ENCODE measurements at regions of chr5 and their contacts with region 1.

Region 1: DNA sequence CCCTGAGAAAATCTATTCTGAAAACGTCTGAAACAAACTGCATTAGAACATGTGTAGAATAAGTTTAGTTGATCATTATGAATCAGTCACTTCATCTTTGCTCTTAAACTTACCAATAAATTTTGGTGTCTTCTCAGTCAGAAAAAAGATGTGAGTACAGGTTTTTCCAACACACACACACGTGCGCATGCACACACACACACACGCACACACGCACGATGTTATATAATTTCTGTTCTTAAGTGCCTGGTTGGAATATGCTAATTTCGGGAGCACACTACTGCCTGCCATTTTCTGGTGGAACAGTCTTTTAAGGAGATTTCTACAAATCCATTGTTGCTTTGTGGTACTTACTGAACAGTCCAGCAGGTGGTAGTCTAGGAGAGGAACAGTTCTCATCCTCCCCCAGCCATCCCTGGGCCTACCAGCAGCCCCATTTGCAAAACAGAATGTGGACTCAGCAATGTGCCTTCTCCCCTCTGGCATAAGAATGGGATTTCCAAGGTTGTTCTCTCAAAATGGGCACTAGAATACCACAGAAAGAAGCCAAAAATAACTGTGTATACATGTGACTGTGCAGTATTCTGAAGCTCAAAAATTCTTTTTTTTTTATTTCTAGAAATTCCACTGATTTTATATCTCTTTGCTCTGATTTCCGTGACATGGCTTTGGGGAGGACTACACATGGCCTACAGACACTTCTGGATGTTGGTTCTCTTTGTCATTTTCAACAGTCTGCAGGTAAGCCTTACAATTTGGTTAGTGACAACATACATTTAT is 281.3 kb downstream of the ARRDC3 start:
- DNase-seq: peak; percentile 75
- H3K4me3 ChIP-seq: no peak overlapping the region
- H3K27ac ChIP-seq: peak overlapping the region in 1 of 4 donors; percentile 20
- H3K4me1 ChIP-seq: peaks cover 0 to 28% (median 7%) of the 10 kb centered on the region in 4 donors
- H3K27me3 ChIP-seq: no peaks in the 10 kb centered on the region
- CTCF ChIP-seq: peak; percentile 73 to 92 (median 77)
- EP300 ChIP-seq: no peak
- POLR2A ChIP-seq: no peak

Region 2: DNA sequence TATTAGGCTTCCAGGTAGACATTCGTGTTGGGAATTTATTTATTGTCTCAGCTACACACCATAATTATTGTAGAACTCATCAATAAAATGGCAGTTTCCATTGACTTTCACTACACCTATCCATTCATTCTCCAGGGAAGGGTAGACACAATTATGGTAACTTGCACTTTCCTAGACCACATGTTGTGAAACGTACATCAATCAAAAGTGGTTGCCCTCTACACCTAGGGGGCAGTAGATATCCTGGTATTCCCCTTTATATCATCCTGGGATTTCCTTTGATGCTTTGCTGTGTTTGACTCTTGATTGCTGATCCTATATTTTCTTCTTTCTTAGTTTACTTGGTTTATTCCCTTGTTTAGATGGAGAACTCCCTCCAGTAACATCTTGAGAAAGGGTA is 495.3 kb before region 1 on chr5:
- in situ Hi-C with region 1: no loop called
- intact Hi-C with region 1: no loop called
- DNase-seq: no peak
- H3K4me3 ChIP-seq: no peak overlapping the region
- H3K27ac ChIP-seq: no peak overlapping the region
- H3K4me1 ChIP-seq: peaks cover 0 to 4% (median 1%) of the 10 kb centered on the region in 4 donors
- H3K27me3 ChIP-seq: no peaks in the 10 kb centered on the region
- CTCF ChIP-seq: peak in 1 of 5 experiments; percentile 26
- EP300 ChIP-seq: no peak
- POLR2A ChIP-seq: no peak

Region 3: DNA sequence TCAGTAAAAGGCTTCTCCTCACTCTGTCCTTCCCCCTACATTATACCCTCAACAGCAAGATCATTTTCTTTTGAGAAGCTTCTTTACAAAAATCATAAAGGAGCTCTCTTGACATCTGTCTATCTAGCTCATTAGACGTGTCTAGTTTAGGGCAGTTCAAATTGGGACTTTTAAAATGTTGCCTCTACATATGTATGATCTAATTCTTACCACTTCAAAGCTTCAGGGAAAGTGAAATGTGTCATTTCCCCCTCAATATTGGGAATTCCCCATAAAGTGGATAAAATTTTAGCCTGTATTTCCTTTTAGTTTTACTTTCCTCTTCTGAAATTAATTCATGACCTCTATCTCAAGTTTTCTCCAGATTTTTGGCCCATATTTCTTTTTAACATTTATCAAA is 42.4 kb before region 1 on chr5:
- in situ Hi-C with region 1: no loop called
- intact Hi-C with region 1: no loop called
- DNase-seq: no peak
- H3K4me3 ChIP-seq: no peak overlapping the region
- H3K27ac ChIP-seq: peak overlapping the region in 2 of 4 donors; percentile 55 to 71
- H3K4me1 ChIP-seq: peaks cover 0 to 27% (median 11%) of the 10 kb centered on the region in 4 donors
- H3K27me3 ChIP-seq: no peaks in the 10 kb centered on the region
- CTCF ChIP-seq: no peak
- EP300 ChIP-seq: no peak
- POLR2A ChIP-seq: no peak

Region 4: GRCh38 chr5:91219803-91220371 is 118.1 kb after region 1 on chr5:
- in situ Hi-C with region 1: loop called in 1 of 4 experiments (anchors 10 kb)
- intact Hi-C with region 1: no loop called
- DNase-seq: no peak
- H3K4me3 ChIP-seq: no peak overlapping the region
- H3K27ac ChIP-seq: peak overlapping the region in 1 of 4 donors; percentile 44
- H3K4me1 ChIP-seq: peaks cover 0 to 14% (median 4%) of the 10 kb centered on the region in 4 donors
- H3K27me3 ChIP-seq: no peaks in the 10 kb centered on the region
- CTCF ChIP-seq: peak in 1 of 5 experiments; percentile 17
- EP300 ChIP-seq: no peak
- POLR2A ChIP-seq: no peak

Region 5: DNA sequence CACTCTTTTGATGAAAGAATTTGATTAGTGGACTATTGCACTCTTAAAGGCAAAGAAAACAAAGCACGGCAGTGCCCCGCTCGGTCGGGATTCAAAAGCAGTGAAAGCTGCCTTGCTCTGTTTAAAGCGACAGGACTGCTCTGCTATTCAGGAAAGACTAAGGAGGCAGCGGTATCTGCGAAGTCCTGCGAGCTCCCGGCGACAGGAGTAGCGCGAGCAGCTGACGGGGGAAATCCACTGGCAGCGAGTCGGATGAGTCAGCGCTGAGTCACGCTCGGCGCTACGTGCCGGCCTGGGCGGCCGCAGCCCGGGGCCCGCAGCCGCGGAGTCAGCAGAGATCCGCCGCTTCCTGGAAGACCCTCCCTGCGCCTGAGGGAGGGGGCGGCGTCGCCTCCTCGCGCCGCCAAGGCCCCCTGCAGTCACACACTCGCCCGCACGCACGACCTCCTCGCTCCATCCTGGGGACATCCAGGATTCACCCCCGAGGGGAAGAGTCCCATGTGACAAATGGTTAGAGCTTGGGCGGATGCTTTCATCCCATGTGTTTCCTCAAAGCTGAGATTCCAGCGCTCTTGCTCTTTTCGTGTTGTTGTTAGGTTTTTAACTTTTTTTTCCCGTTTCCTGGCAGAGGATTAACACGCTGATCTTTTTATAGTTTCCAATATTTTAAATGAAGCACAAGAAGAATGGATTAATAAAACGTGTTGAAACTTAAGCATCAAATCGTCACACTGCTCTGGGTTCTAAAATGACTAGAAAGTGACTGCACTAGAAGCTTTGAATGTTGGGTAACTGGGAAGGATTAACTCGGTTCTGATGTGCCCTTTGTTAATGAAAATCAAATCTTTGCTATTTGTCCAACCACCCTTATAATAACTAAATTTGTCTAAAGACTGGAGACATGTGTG is 178.8 kb after region 1 on chr5:
- in situ Hi-C with region 1: loop called in 1 of 4 experiments (anchors 25 kb)
- intact Hi-C with region 1: no loop called
- DNase-seq: peak; percentile 92
- H3K4me3 ChIP-seq: peak overlapping the region; percentile 41 to 66 (median 46)
- H3K27ac ChIP-seq: peak overlapping the region; percentile 84 to 94 (median 90)
- H3K4me1 ChIP-seq: peaks cover 4 to 21% (median 12%) of the 10 kb centered on the region in 4 donors
- H3K27me3 ChIP-seq: no peaks in the 10 kb centered on the region
- CTCF ChIP-seq: no peak
- EP300 ChIP-seq: peak; percentile 75
- POLR2A ChIP-seq: peak; percentile 74